OCI-LY7 (cell line): ENCODE measurements at regions of chr15 and their contacts with region 1.

Region 1: DNA sequence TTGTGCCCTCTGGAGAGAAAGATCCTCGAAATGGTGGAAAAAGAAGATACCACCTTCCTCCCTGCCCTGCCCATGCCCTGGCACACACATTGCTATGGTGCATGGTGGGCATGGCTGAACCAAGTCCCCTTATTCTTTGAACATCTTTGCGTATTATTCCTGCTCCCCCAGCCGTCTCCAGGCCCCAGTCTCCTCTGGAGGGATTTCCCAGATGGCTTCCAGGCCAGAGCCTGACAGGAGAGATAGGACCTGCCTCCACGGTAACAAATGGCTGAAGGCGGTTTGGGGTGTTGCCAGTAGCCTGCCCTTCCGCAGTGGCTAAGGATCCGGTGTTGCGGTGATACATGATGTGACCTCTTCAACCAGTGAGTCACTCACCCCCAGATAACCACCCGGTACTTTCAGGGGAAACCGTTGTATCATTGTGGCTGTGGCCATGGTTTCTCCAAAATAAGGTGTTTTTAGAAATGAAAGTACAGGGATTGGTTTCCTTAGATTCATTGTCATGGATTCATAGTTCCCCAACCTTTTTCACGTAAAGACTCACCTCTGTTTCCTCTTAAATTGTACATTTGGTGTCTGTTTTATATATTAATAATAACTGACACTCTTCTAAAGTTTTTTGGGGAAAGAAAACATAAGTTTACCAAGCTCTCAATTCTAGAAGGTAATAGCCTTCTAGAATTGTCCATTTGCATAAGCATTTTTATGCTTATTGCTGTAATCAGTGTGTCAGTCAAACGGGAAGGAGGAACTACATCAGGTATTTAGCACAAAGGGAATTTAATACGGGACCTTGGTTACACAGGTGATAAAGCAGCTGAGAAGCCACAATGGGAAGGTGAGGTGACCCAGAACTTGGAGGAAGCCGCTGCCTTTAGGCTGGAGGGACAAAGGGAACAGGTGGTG is 25.9 kb downstream of the SMAD3 start:
- DNase-seq: no peak
- H3K4me3 ChIP-seq: peak overlapping the region; percentile 48
- H3K27ac ChIP-seq: peak overlapping the region; percentile 97
- H3K4me1 ChIP-seq: peaks cover 96% of the 10 kb centered on the region
- CTCF ChIP-seq: no peak

Region 2: GRCh38 chr15:67101911-67102598 is 10.7 kb after region 1 on chr15:
- CTCF ChIA-PET with region 1: interaction called, 4 read pairs
- POLR2A ChIA-PET with region 1: interaction called, 80 read pairs
- intact Hi-C with region 1: no loop called
- DNase-seq: no peak
- H3K4me3 ChIP-seq: peak overlapping the region; percentile 62
- H3K27ac ChIP-seq: peak overlapping the region; percentile 98
- H3K4me1 ChIP-seq: peaks cover 99% of the 10 kb centered on the region
- CTCF ChIP-seq: no peak